ENCODE measurements at regions of chr14 and their contacts with region 1.

Region 1: DNA sequence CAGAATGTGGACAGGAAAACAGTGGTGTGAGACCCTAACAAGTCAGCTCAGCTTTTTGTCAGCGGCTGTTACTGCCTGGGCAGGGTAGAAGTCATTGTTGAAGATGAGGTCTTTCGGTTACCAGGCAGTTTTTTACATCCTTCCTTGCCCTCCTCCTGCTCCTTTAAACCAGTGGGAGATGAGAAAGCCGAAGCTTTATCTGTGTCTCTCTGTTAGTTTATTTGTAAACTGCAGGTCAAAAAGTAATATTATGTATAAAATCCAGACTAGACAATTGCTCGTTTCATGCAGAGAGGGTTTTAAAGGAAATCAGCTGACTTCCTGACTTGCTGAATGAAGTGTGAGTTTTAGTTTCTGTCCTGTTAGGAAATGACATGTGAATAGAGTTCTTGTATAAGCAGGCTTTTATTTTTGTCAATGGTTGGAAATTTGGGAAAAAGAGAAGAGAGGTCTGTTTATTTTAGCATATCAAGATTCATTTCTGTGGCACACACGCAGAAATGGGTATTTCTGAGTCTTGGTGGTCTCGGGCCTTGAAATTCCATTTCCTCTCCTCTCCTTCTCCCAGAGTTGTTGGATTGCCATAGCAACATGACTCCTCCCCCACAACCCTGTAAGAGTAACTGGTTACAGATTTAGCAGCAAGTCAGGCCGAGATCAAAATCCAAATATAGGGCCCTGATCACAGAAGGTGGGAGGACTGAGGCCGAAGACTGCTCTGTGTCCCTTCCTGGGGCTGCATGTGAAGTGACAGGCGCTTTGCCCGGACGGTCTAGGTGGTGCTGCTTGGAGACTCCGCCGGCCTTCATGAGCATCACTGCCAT is 60.8 kb downstream of the SAMD4A start:
- DNase-seq: peak; percentile 88
- H3K4me3 Mint-ChIP-seq: peak overlapping the region; percentile 67
- H3K27ac Mint-ChIP-seq: peak overlapping the region; percentile 72
- H3K4me1 Mint-ChIP-seq: peaks cover 37% of the 10 kb centered on the region
- H3K27me3 Mint-ChIP-seq: no peaks in the 10 kb centered on the region

Region 2: GRCh38 chr14:54652188-54652587 is 24.4 kb after region 1 on chr14:
- intact Hi-C with region 1: no loop called
- DNase-seq: no peak
- H3K4me3 Mint-ChIP-seq: no peak overlapping the region
- H3K27ac Mint-ChIP-seq: no peak overlapping the region
- H3K4me1 Mint-ChIP-seq: peaks cover 5% of the 10 kb centered on the region
- H3K27me3 Mint-ChIP-seq: peaks cover 26% of the 10 kb centered on the region

Region 3: DNA sequence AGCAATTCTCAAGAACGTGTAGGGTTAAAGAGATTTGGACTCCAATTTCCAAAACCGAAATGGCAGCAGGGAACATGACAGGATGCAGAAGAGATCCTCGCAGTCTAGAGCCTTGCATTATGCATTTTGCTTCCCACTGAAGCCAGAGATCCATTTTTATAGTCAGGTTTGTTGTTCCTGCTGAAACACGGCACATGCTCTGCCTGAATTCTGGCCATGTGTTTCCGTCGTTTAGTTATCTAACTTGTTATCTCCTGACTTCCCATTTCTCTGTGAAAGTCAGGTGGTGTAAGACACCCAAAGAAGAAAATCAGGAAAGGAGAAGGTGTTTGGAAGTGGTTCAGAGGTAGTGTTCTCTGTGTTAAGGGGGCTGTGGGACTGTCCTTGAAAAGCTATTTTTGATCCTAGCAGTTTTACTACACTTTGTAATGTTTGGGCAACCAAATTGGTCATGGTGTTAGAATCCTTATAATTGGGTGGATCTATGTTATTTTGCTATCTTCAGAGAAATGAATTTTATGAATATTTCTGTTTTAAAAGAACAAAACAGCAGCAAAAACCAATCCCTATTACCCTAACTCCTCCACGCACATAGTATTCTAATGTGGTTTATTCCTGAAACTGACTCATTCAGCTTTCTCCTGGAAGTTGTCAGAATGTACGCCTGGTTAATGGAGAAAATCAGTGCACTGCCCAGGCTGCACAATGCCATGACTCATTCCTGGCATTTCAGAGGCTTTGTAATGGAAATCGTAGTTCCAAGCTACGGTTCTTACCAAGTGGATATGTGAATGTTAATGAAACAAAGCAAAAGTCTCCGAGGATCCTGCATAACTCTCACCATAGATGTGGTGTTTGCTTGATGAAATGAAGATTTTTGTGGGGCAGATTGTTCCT is 49.3 kb after region 1 on chr14:
- intact Hi-C with region 1: loop called (anchors 10 kb)
- DNase-seq: no peak
- H3K4me3 Mint-ChIP-seq: no peak overlapping the region
- H3K27ac Mint-ChIP-seq: no peak overlapping the region
- H3K4me1 Mint-ChIP-seq: peaks cover 6% of the 10 kb centered on the region
- H3K27me3 Mint-ChIP-seq: peaks cover 21% of the 10 kb centered on the region

Region 4: DNA sequence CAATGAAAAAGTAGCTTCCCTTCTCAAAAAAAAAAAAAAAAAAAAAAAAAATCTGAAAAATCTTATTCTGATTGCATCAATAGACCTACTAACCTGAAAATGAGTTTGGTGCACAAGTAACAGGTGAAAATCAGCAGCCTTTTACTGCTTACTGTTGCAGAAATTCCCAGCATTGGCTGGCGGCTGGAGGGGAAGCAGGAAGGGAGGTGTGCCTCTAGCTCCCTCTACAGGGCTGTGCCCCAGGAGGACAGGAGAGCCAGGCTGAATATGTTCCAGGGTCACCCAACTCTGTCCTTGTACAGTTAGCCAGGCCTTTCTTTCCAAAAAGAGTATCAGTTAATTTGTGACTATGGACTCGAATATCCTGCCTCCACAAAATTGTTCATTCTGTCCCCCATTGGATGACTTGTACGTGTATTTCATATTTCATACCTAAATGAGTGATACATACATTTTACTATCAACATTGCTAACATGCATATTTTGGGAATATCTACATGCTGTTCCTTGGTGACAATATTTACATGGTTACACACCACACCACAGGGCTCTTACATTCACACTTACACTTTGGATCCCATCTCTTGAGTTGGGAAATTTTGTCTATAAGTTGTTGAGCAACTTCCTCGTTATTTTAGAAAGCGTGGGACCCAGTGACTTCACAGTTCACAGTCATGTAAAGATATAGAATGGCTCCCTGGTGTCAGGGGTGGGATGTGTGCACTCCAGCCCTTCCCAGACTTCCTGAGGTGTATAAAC is 64.0 kb after region 1 on chr14:
- intact Hi-C with region 1: loop called (anchors 5 kb)
- DNase-seq: peak; percentile 82
- H3K4me3 Mint-ChIP-seq: no peak overlapping the region
- H3K27ac Mint-ChIP-seq: no peak overlapping the region
- H3K4me1 Mint-ChIP-seq: peaks cover 23% of the 10 kb centered on the region
- H3K27me3 Mint-ChIP-seq: peaks cover 33% of the 10 kb centered on the region